ENCODE measurements at regions of chr6 and their contacts with region 1.

Region 1: GRCh38 chr6:108558372-108559096 is 2.2 kb upstream of the FOXO3 start:
- DNase-seq: peak; percentile 99
- H3K4me3 ChIP-seq: peak overlapping the region; percentile 89 to 94 (median 92)
- H3K27ac ChIP-seq: peak overlapping the region; percentile 93
- H3K4me1 ChIP-seq: peaks cover 22% of the 10 kb centered on the region
- H3K27me3 ChIP-seq: peaks cover 3 to 4% of the 10 kb centered on the region in 2 experiments
- CTCF ChIP-seq: no peak
- POLR2A ChIP-seq: no peak

Region 2: DNA sequence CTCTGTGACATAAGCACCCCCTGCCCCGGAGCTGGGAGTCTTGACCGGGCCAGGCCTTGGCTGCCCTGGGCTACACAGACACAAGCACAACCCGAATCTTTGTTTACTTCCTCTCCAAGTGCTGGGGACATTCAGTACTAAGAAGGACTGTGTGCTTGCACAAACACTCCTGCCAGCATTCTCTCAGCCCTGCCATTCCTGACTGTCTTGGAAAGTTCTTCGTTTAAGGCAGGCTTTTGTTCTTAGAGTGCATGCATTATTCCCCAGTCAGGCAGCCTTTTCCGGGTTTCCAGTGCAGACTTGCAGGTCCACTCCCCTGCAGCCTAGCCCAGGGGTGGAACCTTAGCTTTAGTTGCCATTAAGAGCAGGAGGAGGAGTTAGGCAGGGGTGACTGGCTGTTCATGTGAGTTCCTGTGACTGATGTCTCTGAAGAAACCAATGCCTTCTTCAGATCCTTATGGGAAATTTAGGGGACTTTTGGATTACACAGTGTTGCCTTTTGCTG is 30.8 kb after region 1 on chr6:
- CTCF ChIA-PET with region 1: interaction called, 3 read pairs
- POLR2A ChIA-PET with region 1: interaction called, 11 read pairs
- dilution Hi-C with region 1: no loop called
- intact Hi-C with region 1: loop called (anchors 1 kb)
- DNase-seq: peak; percentile 85
- H3K4me3 ChIP-seq: no peak overlapping the region
- H3K27ac ChIP-seq: peak overlapping the region; percentile 66
- H3K4me1 ChIP-seq: peaks cover 54% of the 10 kb centered on the region
- H3K27me3 ChIP-seq: no peaks in the 10 kb centered on the region
- CTCF ChIP-seq: no peak
- POLR2A ChIP-seq: peak; percentile 20

Region 3: DNA sequence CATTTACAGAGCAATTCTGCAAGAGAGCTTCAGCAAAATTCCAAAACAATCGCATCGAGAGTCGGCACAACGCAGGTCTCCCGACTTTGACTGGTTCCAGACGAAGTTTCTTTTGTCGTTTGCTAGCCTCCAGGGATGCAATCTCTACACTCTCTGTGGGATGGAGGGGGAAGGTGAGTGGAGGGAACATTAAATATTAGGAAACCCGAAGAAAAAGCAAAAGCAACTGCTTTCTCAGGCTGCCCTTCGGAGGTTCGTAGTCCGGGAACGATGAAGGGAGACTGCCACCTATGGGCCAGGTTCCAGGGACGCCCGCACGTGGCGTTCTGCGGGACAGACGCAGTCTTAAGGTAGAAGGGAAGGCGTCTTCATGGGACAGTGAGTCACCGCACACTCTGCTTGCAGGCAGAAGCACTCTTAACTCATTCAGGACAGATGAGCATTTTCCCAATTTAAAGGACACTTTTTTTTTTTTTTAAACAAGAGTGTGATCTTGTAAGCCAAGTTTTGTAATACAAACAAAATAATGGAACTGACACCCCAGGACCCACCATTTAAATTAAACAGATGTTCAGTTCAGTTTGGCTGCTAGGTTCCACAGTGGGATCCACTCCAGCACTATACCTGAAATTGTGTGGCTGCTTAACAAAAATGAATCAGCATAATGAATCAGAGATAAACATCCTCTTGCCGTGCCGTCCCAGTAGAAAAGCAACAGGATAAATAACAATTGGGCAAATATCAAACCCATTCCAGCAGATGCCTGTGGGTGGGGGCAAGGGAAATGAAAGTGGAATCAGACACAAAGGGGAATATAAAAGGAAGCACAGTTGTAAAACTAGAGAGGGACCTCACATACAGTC is 223.9 kb after region 1 on chr6:
- CTCF ChIA-PET with region 1: interaction called, 14 read pairs
- POLR2A ChIA-PET with region 1: interaction called, 3 read pairs
- dilution Hi-C with region 1: no loop called
- intact Hi-C with region 1: loop called (anchors 1 kb)
- DNase-seq: peak; percentile 88
- H3K4me3 ChIP-seq: peak overlapping the region; percentile 56 to 79 (median 60)
- H3K27ac ChIP-seq: no peak overlapping the region
- H3K4me1 ChIP-seq: peaks cover 18% of the 10 kb centered on the region
- H3K27me3 ChIP-seq: no peaks in the 10 kb centered on the region
- CTCF ChIP-seq: peak; percentile 72 to 85
- POLR2A ChIP-seq: no peak

Region 4: DNA sequence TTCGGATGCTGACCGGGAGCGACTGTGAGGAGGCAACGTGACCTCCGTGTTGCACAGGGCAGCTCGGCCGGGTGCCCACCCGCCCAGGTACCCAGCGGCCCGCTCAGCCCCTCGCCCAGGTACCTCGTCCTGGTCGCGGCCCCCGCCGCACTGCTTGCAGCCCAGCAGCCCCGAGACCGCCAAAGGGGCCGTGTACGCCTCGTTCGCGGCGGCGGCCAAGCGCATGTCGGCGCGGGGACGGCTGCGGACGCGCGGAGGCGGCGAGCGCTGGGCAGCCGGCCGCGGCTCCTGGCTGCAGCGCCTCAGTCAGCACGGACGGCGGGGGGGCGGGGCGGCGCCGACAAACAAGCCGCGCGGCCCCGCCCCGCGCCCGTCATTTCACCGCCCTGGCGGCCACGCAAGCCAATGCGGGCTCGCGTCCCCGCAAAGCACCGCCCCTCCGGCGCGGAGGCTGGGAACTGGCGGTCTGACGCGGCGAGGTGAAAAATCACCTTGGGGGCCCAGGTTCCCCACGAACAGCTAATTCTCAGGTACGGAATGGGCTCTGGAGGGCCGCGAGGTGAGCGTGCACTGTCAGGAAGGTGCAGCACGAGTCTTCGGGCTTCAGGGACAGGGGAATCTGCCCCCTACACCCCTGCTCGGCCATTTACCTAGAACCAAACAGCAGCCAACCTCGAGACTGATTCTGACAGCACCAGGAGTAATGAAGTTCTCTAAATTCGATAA is 450.9 kb after region 1 on chr6:
- CTCF ChIA-PET with region 1: no interaction called
- POLR2A ChIA-PET with region 1: no interaction called
- dilution Hi-C with region 1: no loop called
- intact Hi-C with region 1: loop called (anchors 2 kb)
- DNase-seq: peak; percentile 86
- H3K4me3 ChIP-seq: peak overlapping the region; percentile 63 to 95 (median 92)
- H3K27ac ChIP-seq: peak overlapping the region; percentile 41
- H3K4me1 ChIP-seq: peaks cover 6% of the 10 kb centered on the region
- H3K27me3 ChIP-seq: no peaks in the 10 kb centered on the region
- CTCF ChIP-seq: no peak
- POLR2A ChIP-seq: peak; percentile 75

Region 5: DNA sequence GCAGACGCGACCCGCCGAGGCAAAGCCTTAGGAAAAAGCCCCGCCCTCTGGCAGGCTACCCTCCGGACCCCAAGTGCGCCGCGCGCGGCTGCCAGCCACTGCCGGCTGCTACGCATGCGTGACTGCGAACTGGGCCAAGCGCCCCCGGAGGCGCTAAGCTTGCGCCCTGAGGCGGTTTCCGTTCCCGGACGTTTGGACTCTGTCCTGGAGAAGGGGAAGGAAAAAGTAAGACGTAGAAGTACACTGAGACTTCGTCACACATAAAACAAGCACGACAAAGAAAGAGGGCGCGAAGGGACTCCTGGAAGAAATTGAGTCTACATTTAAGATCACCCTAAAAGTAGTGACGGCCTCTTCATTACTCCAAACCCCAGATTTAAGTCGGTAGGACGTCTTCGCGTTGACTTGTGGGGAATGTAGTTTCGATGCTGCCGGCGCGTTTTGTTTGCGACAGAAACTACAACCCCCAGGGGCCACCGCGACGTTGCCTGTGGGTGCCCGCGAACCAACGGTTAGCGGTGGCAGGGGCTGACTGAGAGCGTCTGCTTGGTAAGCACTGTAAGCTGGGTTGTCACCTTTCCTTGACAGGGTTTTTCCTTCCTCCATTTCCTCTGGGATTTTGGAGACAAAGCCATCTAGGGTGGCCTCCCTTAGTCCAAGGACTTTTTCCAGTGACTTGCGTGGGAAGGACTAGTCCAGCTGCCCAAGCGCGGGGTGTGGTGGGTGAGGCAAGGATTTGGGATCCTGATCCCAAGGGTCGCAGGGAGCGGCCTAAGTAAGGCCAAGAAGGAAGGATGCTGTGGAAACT is 536.7 kb after region 1 on chr6 and contains the start of gene CEP57L1:
- CTCF ChIA-PET with region 1: interaction called, 4 read pairs
- POLR2A ChIA-PET with region 1: interaction called, 3 read pairs
- dilution Hi-C with region 1: no loop called
- intact Hi-C with region 1: loop called (anchors 1 kb)
- DNase-seq: peak; percentile 99
- H3K4me3 ChIP-seq: peak within 1 kb of the TSS; percentile 68 to 100 (median 100)
- H3K27ac ChIP-seq: peak within 1 kb of the TSS; percentile 92
- H3K4me1 ChIP-seq: peaks cover 27% of the 10 kb centered on the region
- H3K27me3 ChIP-seq: no peaks in the 10 kb centered on the region
- CTCF ChIP-seq: peak in 1 of 2 donors; percentile 25
- POLR2A ChIP-seq: peak; percentile 87
- total RNA-seq, gene CEP57L1: 20.9 and 21.0 TPM in 2 replicates

Measured in endothelial cell of umbilical vein (primary cell).